ENCODE measurements at regions of chr11 and their contacts with region 1.

Region 1: GRCh38 chr11:61577732-61578425 is 3.0 kb downstream of the SYT7 start:
- DNase-seq: no peak
- H3K4me3 ChIP-seq: no peak overlapping the region
- H3K27ac ChIP-seq: no peak overlapping the region
- H3K27me3 ChIP-seq: peaks cover 32% of the 10 kb centered on the region
- CTCF ChIP-seq: peak; percentile 57

Region 2: GRCh38 chr11:61645179-61645868 is 67.4 kb after region 1 on chr11:
- in situ Hi-C with region 1: loop called (anchors 10 kb)
- DNase-seq: no peak
- H3K4me3 ChIP-seq: no peak overlapping the region
- H3K27ac ChIP-seq: no peak overlapping the region
- H3K27me3 ChIP-seq: peaks cover 2% of the 10 kb centered on the region
- CTCF ChIP-seq: no peak

Measured in brain microvascular endothelial cell (primary cell).